ENCODE measurements at regions of chrX and their contacts with region 1.

Region 1: DNA sequence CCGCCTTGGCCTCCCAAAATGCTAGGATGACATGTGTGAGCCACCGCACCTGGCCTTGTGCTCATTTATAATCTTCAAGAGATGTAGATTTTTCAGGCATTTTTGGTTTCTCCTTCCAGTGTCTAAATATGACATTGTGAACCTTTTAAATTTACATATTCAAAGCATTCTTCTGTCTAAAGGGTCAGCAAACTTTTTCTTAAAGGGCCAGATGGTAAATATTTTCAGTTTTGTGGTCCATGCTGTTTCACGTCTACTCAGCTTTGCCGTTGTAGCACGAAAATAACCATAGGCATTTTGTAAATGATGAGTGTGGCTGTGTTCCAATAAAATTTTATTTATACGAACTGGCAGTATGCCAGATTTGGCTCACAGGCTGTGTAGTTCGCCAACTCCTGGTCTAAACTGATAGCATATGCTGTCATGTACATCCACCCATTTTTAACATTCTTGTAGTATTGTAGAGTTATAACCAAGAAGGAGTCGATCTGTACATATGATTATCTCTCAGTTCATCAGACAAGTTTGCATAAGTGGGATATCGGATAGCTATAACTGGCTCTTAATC is 12.7 kb upstream of the GCNA start:
- DNase-seq: no peak
- H3K4me3 ChIP-seq: no peak overlapping the region
- H3K27ac ChIP-seq: no peak overlapping the region
- H3K4me1 ChIP-seq: no peaks in the 10 kb centered on the region
- H3K27me3 ChIP-seq: no peaks in the 10 kb centered on the region
- CTCF ChIP-seq: no peak

Region 2: GRCh38 chrX:71269801-71270395 is 295.7 kb before region 1 on chrX:
- intact Hi-C with region 1: no loop called
- DNase-seq: no peak
- H3K4me3 ChIP-seq: no peak overlapping the region
- H3K27ac ChIP-seq: no peak overlapping the region
- H3K4me1 ChIP-seq: no peaks in the 10 kb centered on the region
- H3K27me3 ChIP-seq: no peaks in the 10 kb centered on the region
- CTCF ChIP-seq: no peak

Region 3: DNA sequence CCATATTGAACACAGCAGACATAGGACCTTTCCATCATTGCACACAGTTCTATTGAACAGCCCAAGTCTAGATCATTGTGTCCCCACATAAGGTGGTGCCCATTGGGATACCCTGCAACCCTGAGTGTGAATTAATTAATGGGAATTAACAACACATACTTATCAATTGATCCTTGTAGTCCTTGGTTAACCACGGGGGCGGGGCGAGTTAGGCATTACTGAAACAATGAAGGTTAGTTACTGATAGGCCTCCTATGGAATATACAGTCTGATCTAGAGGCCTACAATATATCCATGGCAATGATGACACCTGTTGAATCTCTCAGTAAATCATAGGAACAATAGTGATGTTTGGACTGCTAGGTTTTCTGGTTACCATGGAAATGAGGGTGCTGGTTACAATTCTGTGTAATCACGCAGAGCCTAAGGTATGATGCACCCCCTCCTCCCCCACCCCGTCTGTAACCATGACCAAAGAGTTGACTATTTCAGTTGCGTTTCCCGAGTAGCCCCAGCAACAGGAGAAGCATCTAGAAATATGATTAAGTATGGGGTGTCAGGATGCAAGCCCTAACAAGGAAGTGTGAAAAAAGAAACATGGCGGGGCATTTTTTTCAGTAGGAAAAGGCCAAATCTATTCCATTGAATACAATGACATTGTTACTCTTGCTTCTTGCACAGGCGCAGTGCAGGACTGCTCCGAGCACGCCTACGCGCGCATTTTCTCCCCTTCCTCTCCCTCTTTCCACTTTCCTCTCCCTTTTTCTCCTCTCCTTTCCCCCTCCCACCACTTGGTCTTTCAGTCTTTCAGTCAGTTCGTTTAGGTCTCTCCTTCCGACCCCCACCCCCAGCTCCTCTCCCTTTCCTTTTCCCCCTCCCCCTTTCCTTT is 282.8 kb before region 1 on chrX:
- intact Hi-C with region 1: no loop called
- DNase-seq: no peak
- H3K4me3 ChIP-seq: peak overlapping the region; percentile 29
- H3K27ac ChIP-seq: peak overlapping the region; percentile 89
- H3K4me1 ChIP-seq: no peaks in the 10 kb centered on the region
- H3K27me3 ChIP-seq: no peaks in the 10 kb centered on the region
- CTCF ChIP-seq: no peak

Region 4: DNA sequence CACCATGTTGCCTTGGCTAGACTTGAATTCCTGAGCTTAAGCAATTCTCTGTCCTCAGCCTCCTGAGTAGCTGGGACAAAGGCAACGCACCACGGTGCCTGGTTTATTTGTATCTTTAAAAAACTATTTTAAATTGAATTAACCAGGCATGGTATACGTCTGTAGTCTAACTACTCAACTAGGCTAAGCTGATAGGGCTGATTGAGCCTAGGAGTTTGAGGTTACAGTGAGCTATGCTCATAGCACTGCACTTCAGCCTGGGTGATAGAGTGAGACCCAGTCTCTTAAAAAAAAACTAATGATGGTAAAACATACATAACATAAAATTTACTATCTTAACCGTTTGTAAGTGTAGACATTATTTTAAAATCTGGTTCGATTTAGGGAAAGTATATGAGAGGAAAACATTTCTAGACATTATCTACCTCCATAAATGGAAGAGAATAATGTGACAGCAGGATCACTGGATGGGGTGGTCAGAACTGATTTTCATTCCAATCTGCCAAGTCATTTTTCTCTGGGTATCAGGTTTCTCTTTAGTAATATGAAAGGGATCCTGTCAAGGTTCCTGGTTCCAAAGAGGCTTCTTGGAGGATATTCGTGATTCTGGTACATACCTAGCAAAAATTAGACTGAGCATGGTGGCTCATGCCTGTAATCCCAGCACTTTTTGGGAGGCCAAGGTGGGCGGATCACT is 272.7 kb before region 1 on chrX:
- intact Hi-C with region 1: loop called (anchors 10 kb)
- DNase-seq: no peak
- H3K4me3 ChIP-seq: no peak overlapping the region
- H3K27ac ChIP-seq: no peak overlapping the region
- H3K4me1 ChIP-seq: no peaks in the 10 kb centered on the region
- H3K27me3 ChIP-seq: no peaks in the 10 kb centered on the region
- CTCF ChIP-seq: no peak

Region 5: DNA sequence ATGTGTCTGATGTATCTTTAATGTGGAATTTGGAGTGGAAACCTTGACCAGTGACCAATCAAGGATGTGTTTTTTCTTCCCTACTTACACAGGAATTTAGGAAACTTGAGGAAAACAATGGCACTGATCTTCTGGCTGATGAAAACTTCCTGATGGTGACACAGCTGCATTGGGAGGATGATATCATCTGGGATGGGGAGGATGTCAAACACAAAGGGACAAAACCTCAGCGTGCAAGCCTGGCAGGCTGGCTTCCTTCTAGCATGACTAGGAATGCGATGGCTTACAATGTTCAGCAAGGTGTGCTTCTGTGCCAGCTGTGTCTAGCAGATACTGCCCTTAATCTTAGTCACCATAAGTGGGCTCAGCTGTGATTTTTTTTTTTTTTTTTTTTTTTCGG is 186.8 kb before region 1 on chrX:
- intact Hi-C with region 1: loop called (anchors 10 kb)
- DNase-seq: no peak
- H3K4me3 ChIP-seq: no peak overlapping the region
- H3K27ac ChIP-seq: no peak overlapping the region
- H3K4me1 ChIP-seq: no peaks in the 10 kb centered on the region
- H3K27me3 ChIP-seq: no peaks in the 10 kb centered on the region
- CTCF ChIP-seq: no peak

Region 6: DNA sequence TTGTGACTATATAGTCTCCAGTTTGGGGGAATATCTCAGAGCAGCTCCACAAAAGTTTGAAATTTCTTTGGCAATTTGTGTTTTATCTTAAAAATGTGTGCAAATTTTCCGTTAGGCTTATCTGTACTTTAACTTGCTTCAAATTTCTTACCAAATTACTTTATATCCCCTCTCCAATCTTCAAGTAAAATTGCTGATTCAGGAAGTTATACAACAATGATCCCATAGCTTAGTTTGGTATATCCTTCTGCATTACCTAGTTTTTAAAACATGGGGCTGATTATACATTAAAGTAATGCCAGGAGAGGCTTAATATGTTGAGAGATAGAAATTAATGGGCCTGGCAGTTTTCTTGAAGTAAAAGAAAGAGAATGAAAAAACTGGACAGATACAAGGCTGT is 132.8 kb before region 1 on chrX:
- intact Hi-C with region 1: no loop called
- DNase-seq: no peak
- H3K4me3 ChIP-seq: no peak overlapping the region
- H3K27ac ChIP-seq: no peak overlapping the region
- H3K4me1 ChIP-seq: no peaks in the 10 kb centered on the region
- H3K27me3 ChIP-seq: no peaks in the 10 kb centered on the region
- CTCF ChIP-seq: no peak

Region 7: GRCh38 chrX:72430405-72430968 is 864.9 kb after region 1 on chrX:
- intact Hi-C with region 1: no loop called
- DNase-seq: no peak
- H3K4me3 ChIP-seq: no peak overlapping the region
- H3K27ac ChIP-seq: no peak overlapping the region
- H3K4me1 ChIP-seq: no peaks in the 10 kb centered on the region
- H3K27me3 ChIP-seq: no peaks in the 10 kb centered on the region
- CTCF ChIP-seq: no peak